ENCODE measurements at regions of chr7 and their contacts with region 1.

Region 1: GRCh38 chr7:12490117-12490688 is 80.3 kb upstream of the SCIN start:
- DNase-seq: peak in 4 of 5 donors; percentile 13 to 39 (median 31)
- H3K4me3 ChIP-seq: no peak overlapping the region
- H3K4me3 Mint-ChIP-seq: no peak overlapping the region
- H3K27ac ChIP-seq: no peak overlapping the region
- H3K27ac Mint-ChIP-seq: no peak overlapping the region
- H3K4me1 ChIP-seq: no peaks in the 10 kb centered on the region
- H3K4me1 Mint-ChIP-seq: peaks cover 0 to 2% (median under 1%) of the 10 kb centered on the region in 4 donors
- H3K27me3 ChIP-seq: no peaks in the 10 kb centered on the region
- H3K27me3 Mint-ChIP-seq: peaks cover 2 to 5% of the 10 kb centered on the region in 2 donors

Region 2: DNA sequence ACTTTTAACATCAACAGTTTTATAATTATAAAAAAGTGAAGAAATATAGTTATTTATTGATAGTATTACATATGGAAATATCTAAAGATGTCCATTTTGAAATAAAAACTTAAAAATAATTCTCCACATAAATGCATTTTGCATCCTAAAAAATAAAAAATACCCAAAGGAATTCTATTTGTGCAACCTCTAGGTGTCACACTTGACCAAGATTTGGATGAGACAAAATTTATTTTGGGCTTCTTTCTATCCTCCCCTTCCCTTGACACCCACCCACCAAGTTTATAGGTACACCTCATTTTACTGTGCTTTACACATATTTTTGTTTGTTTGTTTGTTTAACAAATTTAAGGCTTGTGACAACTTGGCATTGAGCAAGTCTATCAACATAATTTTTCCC is 654.9 kb before region 1 on chr7:
- CTCF ChIA-PET with region 1: no interaction called
- POLR2A ChIA-PET with region 1: no interaction called
- intact Hi-C with region 1: loop called (anchors 2 kb)
- DNase-seq: no peak
- H3K4me3 ChIP-seq: no peak overlapping the region
- H3K4me3 Mint-ChIP-seq: no peak overlapping the region
- H3K27ac ChIP-seq: no peak overlapping the region
- H3K27ac Mint-ChIP-seq: no peak overlapping the region
- H3K4me1 ChIP-seq: peaks cover 4% of the 10 kb centered on the region
- H3K4me1 Mint-ChIP-seq: peaks cover 0 to 10% (median 5%) of the 10 kb centered on the region in 4 donors
- H3K27me3 ChIP-seq: peaks cover 8% of the 10 kb centered on the region
- H3K27me3 Mint-ChIP-seq: peaks cover 14 to 15% of the 10 kb centered on the region in 2 donors

Region 3: GRCh38 chr7:12389089-12389700 is 101.0 kb before region 1 on chr7:
- CTCF ChIA-PET with region 1: interaction called, 5 read pairs
- POLR2A ChIA-PET with region 1: no interaction called
- intact Hi-C with region 1: loop called (anchors 1 kb)
- DNase-seq: peak; percentile 29 to 46 (median 33)
- H3K4me3 ChIP-seq: no peak overlapping the region
- H3K4me3 Mint-ChIP-seq: no peak overlapping the region
- H3K27ac ChIP-seq: no peak overlapping the region
- H3K27ac Mint-ChIP-seq: peak overlapping the region in 1 of 7 donors; percentile 2
- H3K4me1 ChIP-seq: no peaks in the 10 kb centered on the region
- H3K4me1 Mint-ChIP-seq: no peaks in the 10 kb centered on the region
- H3K27me3 ChIP-seq: no peaks in the 10 kb centered on the region
- H3K27me3 Mint-ChIP-seq: peaks cover 0 to 2% of the 10 kb centered on the region in 2 donors

Region 4: DNA sequence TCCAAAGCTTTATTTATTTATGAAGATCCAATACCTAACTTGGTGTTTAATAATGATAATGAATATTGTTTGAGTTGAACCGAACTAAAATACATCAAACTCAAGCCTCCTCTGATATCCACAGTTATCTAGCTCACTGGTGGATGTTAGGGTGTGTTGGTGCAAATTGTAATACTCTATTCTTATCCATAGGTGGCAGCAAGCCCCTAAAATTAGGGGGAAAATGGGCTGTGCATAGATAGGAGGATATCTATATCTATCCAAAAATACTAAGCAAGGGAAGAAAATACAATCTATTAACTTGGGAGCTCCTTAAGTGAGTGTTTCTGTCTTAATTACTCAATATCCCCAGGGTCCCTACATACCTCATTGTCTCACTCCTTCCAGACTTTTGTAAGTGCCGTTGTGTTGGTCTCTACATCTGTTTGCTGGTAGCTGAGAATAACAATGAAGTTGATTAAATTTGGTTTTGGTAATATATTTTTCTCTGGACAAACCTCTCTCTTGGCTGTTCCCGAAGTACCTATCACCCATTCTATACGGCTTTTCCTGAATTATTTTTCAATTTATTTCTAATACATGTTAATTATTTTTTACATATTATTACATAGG is 31.6 kb before region 1 on chr7:
- CTCF ChIA-PET with region 1: interaction called, 17 read pairs
- POLR2A ChIA-PET with region 1: no interaction called
- intact Hi-C with region 1: loop called (anchors 1 kb)
- DNase-seq: peak in 4 of 5 donors; percentile 14 to 38 (median 26)
- H3K4me3 ChIP-seq: no peak overlapping the region
- H3K4me3 Mint-ChIP-seq: no peak overlapping the region
- H3K27ac ChIP-seq: no peak overlapping the region
- H3K27ac Mint-ChIP-seq: no peak overlapping the region
- H3K4me1 ChIP-seq: no peaks in the 10 kb centered on the region
- H3K4me1 Mint-ChIP-seq: no peaks in the 10 kb centered on the region
- H3K27me3 ChIP-seq: no peaks in the 10 kb centered on the region
- H3K27me3 Mint-ChIP-seq: peaks cover 7 to 10% of the 10 kb centered on the region in 2 donors